Activated B cell treated with CpG ODN at 0.5 μM for 24 hours (primary cell): ENCODE measurements at regions of chr1 and their contacts with region 1.

Region 1: DNA sequence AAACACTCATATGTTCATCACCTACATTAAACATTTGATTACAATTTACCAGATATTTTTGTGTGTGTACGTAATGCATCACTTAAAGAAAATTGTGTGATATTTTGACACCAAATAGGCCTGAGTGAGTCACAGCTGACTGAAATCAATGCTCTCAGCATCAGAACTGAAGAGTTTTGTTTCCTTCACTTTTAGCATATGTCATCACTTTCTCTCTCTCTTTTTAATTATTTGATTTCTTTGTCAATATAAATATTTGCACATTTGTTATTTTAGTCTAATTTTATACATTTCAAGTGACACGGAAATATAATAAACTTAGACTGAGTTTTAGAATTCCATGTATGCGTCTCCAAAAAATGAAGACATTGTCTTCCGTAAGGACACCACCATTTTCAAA is 545.3 kb downstream of the PTPRC start:
- DNase-seq: no peak
- ATAC-seq: no peak
- H3K4me3 Mint-ChIP-seq: no peak overlapping the region
- H3K27ac Mint-ChIP-seq: no peak overlapping the region
- H3K4me1 Mint-ChIP-seq: no peaks in the 10 kb centered on the region
- H3K27me3 Mint-ChIP-seq: no peaks in the 10 kb centered on the region
- CTCF ChIP-seq: no peak

Region 2: GRCh38 chr1:199163670-199164069 is 20.5 kb before region 1 on chr1:
- CTCF ChIA-PET with region 1: no interaction called
- POLR2A ChIA-PET with region 1: no interaction called
- intact Hi-C with region 1: no loop called
- DNase-seq: no peak
- ATAC-seq: no peak
- H3K4me3 Mint-ChIP-seq: no peak overlapping the region
- H3K27ac Mint-ChIP-seq: no peak overlapping the region
- H3K4me1 Mint-ChIP-seq: peaks cover 15% of the 10 kb centered on the region
- H3K27me3 Mint-ChIP-seq: peaks cover 15% of the 10 kb centered on the region
- CTCF ChIP-seq: no peak

Region 3: DNA sequence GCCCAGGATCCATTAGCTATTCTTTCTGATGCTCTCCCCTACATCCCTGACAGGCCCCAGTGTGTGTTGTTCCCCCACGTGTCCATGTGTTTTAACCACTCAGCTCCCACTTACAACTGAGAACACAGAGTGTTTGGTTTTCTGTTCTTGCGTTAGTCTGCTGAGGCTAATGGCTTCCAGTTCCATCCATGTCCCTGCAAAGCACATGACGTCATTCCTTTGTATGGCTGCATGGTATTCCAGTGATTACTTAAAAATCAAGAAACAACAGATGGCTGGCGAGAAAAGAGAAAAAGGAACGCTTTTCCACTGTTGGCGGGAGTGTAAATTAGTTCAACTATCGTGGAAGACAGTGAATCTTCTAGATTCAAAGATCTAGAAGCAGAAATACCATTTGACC is 10.7 kb after region 1 on chr1:
- CTCF ChIA-PET with region 1: no interaction called
- POLR2A ChIA-PET with region 1: no interaction called
- intact Hi-C with region 1: loop called (anchors 1 kb)
- DNase-seq: no peak
- ATAC-seq: no peak
- H3K4me3 Mint-ChIP-seq: no peak overlapping the region
- H3K27ac Mint-ChIP-seq: no peak overlapping the region
- H3K4me1 Mint-ChIP-seq: no peaks in the 10 kb centered on the region
- H3K27me3 Mint-ChIP-seq: no peaks in the 10 kb centered on the region
- CTCF ChIP-seq: no peak